ENCODE measurements at regions of chr10 and their contacts with region 1.

Region 1: GRCh38 chr10:104291439-104291951 is 22.5 kb downstream of the GSTO2 start:
- DNase-seq: peak; percentile 88 to 91
- H3K4me3 ChIP-seq: no peak overlapping the region
- H3K27ac ChIP-seq: no peak overlapping the region
- H3K4me1 ChIP-seq: peaks cover 5 to 6% of the 10 kb centered on the region in 2 donors
- H3K27me3 ChIP-seq: no peaks in the 10 kb centered on the region
- CTCF ChIP-seq: peak; percentile 99 to 100 (median 100)
- POLR2A ChIP-seq: no peak

Region 2: GRCh38 chr10:103918053-103918846 is 373.2 kb before region 1 on chr10 and contains the start of gene STN1:
- intact Hi-C with region 1: no loop called
- DNase-seq: peak; percentile 98
- H3K4me3 ChIP-seq: peak within 1 kb of the TSS; percentile 30 to 93 (median 71)
- H3K27ac ChIP-seq: peak within 1 kb of the TSS; percentile 87 to 99 (median 96)
- H3K4me1 ChIP-seq: peaks cover 15 to 27% of the 10 kb centered on the region in 2 donors
- H3K27me3 ChIP-seq: no peaks in the 10 kb centered on the region
- CTCF ChIP-seq: peak in 1 of 6 experiments; percentile 12
- POLR2A ChIP-seq: peak; percentile 59 to 90
- total RNA-seq, gene STN1: 20.7 to 37.1 (median 30.7) TPM

Region 3: GRCh38 chr10:104350127-104350635 is 58.7 kb after region 1 on chr10:
- intact Hi-C with region 1: loop called (anchors 2 kb)
- DNase-seq: no peak
- H3K4me3 ChIP-seq: no peak overlapping the region
- H3K27ac ChIP-seq: peak overlapping the region; percentile 19 to 69 (median 39)
- H3K4me1 ChIP-seq: peaks cover 12 to 35% of the 10 kb centered on the region in 2 donors
- H3K27me3 ChIP-seq: no peaks in the 10 kb centered on the region
- CTCF ChIP-seq: peak; percentile 29 to 96 (median 68)
- POLR2A ChIP-seq: no peak

Region 4: DNA sequence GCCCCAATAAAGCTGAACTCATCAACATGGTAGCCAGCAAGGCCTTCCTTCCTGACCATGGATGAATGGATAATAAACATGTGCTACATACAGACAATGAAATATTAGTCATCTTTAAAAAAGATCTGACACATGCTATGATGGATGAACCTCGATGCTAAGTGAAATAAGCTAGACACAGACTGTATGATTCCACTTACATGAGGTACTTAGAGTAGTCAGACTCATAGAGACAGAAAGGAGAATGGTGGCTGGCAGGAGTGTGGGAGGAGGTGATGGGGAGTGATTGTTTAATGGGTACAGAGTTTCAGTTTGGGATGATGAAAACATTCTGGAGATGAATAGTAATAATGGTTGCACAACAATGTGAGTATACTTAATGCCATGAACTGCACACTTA is 235.5 kb after region 1 on chr10:
- intact Hi-C with region 1: no loop called
- DNase-seq: no peak
- H3K4me3 ChIP-seq: no peak overlapping the region
- H3K27ac ChIP-seq: no peak overlapping the region
- H3K4me1 ChIP-seq: no peaks in the 10 kb centered on the region
- H3K27me3 ChIP-seq: no peaks in the 10 kb centered on the region
- CTCF ChIP-seq: no peak
- POLR2A ChIP-seq: no peak